ENCODE measurements at regions of chr1 and their contacts with region 1.

Region 1: GRCh38 chr1:56411484-56412180 is 167.7 kb downstream of the PLPP3 start:
- DNase-seq: no peak
- ATAC-seq: no peak
- H3K4me3 ChIP-seq: no peak overlapping the region
- H3K27ac ChIP-seq: peak overlapping the region; percentile 34
- H3K4me1 ChIP-seq: peaks cover 73% of the 10 kb centered on the region
- H3K27me3 ChIP-seq: no peaks in the 10 kb centered on the region
- CTCF ChIP-seq: peak; percentile 28
- EP300 ChIP-seq: no peak
- POLR2A ChIP-seq: no peak
- RAD21 ChIP-seq: no peak

Region 2: DNA sequence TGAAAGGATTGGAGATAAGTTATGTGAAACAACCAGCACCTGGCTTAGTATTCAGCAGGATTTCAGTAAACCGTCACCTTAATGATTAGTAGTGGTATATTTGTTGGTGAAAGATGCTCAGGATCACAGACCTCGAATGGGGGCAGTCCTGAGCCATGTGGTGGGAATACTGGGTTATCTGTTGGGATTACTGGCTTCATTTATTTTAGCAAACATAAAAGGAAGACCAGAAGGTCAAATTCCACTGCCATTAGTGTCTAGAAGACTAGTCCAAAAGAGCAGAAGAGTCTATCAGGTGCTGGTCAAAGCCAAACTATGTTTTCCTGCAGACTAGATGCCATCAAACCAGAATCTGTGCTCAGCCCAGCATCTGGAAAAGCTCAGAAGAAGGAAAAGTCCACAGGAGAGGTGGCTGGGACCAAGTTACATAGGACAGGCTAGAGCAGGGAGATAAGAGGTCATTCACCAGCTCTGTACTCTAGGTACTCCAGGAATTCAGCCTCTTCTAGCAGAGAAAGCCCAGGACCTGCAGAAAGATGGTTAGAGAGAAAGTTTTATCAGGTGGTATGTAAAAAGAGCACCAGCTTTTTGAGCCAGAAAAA is 175.6 kb before region 1 on chr1:
- CTCF ChIA-PET with region 1: no interaction called
- POLR2A ChIA-PET with region 1: no interaction called
- in situ Hi-C with region 1: no loop called
- intact Hi-C with region 1: loop called (anchors 5 kb)
- DNase-seq: peak; percentile 78
- ATAC-seq: peak; percentile 91
- H3K4me3 ChIP-seq: no peak overlapping the region
- H3K27ac ChIP-seq: no peak overlapping the region
- H3K4me1 ChIP-seq: peaks cover 19% of the 10 kb centered on the region
- H3K27me3 ChIP-seq: no peaks in the 10 kb centered on the region
- CTCF ChIP-seq: peak; percentile 64
- EP300 ChIP-seq: peak in 1 of 2 experiments; percentile 25; a peak in 1 of 4 replicates
- POLR2A ChIP-seq: no peak
- RAD21 ChIP-seq: no peak

Region 3: DNA sequence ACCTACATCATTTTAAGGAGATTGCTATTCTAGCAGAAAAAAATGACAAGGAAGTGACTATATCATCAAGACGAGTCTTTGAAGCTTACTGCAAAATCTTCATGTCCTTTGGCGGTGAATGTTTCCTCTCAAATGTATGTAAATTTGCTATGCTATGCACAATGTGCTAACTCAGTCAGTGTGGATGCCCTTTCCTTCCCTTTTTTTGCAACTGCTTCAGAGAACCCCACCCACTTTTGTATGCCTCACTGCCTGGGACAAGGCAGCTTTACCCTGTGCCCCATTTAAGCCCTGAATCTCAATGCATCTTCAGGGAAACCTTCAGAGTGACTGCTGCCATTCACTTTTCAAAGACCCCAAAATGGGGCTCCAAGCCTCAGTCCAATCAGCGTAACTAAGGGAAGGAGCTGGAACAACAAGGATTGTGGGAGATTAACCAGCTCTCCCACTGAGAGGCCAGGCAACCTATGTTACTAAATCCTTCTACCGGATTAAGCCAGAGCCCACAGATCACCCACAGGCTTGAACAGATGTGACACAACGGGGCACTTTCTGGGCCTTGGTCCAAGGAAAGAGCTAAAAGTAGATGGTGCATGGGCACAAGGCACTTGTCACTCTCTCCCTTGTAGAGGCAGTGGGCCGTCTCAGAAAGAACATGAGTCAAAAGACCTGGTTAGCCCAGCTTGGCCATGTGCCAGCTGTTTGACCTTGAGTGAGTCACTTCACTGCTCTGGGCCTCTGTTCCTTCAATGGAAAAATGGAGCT is 13.3 kb after region 1 on chr1:
- CTCF ChIA-PET with region 1: no interaction called
- POLR2A ChIA-PET with region 1: interaction called, 17 read pairs
- in situ Hi-C with region 1: no loop called
- intact Hi-C with region 1: no loop called
- DNase-seq: peak; percentile 76
- ATAC-seq: peak; percentile 35
- H3K4me3 ChIP-seq: no peak overlapping the region
- H3K27ac ChIP-seq: no peak overlapping the region
- H3K4me1 ChIP-seq: peaks cover 39% of the 10 kb centered on the region
- H3K27me3 ChIP-seq: no peaks in the 10 kb centered on the region
- CTCF ChIP-seq: no peak
- EP300 ChIP-seq: no peak; a peak in 1 of 4 replicates
- POLR2A ChIP-seq: no peak
- RAD21 ChIP-seq: no peak

Region 4: DNA sequence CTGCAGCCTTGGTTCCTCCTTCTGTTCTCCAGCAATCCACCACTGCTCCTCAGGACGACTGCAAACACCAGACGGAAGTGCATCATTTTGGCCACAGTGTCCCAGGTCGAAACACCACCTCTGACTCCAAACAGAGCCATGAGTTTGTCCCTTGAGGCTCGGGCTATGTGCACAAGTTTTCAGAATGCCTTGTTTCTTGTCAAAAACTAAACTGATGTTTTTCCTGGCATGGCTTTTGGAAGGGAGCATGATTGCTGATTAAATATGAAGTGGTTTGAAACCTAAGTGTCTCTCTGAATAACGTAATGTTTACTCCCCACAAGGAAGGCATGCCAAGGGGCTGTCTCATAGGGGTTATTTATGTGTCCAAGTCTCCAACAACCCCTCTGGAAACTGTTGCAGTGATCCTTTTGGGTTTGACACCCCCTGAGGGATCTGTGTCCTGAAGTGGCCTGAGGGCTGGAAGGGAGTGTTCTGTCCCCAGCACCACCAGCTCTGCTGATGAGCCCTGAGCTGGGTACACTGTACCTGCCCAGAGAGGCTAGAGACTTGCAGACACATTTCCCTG is 35.0 kb after region 1 on chr1:
- CTCF ChIA-PET with region 1: no interaction called
- POLR2A ChIA-PET with region 1: interaction called, 14 read pairs
- in situ Hi-C with region 1: no loop called
- intact Hi-C with region 1: loop called (anchors 5 kb)
- DNase-seq: no peak
- ATAC-seq: no peak
- H3K4me3 ChIP-seq: no peak overlapping the region
- H3K27ac ChIP-seq: peak overlapping the region; percentile 7
- H3K4me1 ChIP-seq: peaks cover 88% of the 10 kb centered on the region
- H3K27me3 ChIP-seq: no peaks in the 10 kb centered on the region
- CTCF ChIP-seq: no peak
- EP300 ChIP-seq: no peak
- POLR2A ChIP-seq: no peak
- RAD21 ChIP-seq: no peak

Region 5: GRCh38 chr1:56477164-56478111 is 65.8 kb after region 1 on chr1:
- CTCF ChIA-PET with region 1: no interaction called
- POLR2A ChIA-PET with region 1: interaction called, 11 read pairs
- in situ Hi-C with region 1: no loop called
- intact Hi-C with region 1: loop called (anchors 1 kb)
- DNase-seq: peak; percentile 85
- ATAC-seq: peak; percentile 90
- H3K4me3 ChIP-seq: peak overlapping the region; percentile 64 to 77 (median 68)
- H3K27ac ChIP-seq: peak overlapping the region; percentile 95
- H3K4me1 ChIP-seq: peaks cover 82% of the 10 kb centered on the region
- H3K27me3 ChIP-seq: no peaks in the 10 kb centered on the region
- CTCF ChIP-seq: no peak
- EP300 ChIP-seq: peak in 1 of 2 experiments; percentile 54; a peak in 2 of 4 replicates
- POLR2A ChIP-seq: peak; percentile 44 to 73; a peak in 2 of 4 replicates
- RAD21 ChIP-seq: no peak; the same call in none of the 2 replicates

Region 6: DNA sequence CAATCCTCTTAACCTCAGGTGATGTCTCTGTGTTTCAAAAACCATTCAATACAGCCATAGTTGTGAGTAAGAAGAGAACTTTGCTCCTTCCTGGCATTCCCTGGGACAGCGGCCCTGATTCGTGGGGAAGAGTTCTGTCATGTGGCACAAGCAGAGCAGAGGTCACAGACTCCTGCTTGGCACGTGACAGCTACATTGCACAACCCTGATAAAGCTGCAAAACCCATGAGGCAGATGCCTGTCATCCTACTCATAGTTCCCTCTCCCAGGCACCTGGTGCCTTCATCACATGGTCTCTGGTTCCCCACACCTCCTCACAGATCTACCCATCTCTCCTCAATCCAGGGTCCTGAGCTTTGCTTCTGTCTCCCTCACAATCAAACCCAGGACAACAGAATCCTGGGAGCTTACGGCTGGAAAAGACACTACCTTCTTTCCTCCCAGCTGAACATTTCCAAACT is 96.9 kb after region 1 on chr1:
- CTCF ChIA-PET with region 1: no interaction called
- POLR2A ChIA-PET with region 1: interaction called, 19 read pairs
- in situ Hi-C with region 1: loop called (anchors 5 kb)
- intact Hi-C with region 1: loop called (anchors 2 kb)
- DNase-seq: peak; percentile 98
- ATAC-seq: peak; percentile 91
- H3K4me3 ChIP-seq: no peak overlapping the region
- H3K27ac ChIP-seq: peak overlapping the region; percentile 93
- H3K4me1 ChIP-seq: peaks cover 89% of the 10 kb centered on the region
- H3K27me3 ChIP-seq: no peaks in the 10 kb centered on the region
- CTCF ChIP-seq: peak; percentile 20; the same call in 1 of the 2 replicates
- EP300 ChIP-seq: peak; percentile 60 to 95; a peak in 3 of 4 replicates
- POLR2A ChIP-seq: peak in 1 of 2 experiments; percentile 43; a peak in 1 of 4 replicates
- RAD21 ChIP-seq: peak; percentile 74

Region 7: DNA sequence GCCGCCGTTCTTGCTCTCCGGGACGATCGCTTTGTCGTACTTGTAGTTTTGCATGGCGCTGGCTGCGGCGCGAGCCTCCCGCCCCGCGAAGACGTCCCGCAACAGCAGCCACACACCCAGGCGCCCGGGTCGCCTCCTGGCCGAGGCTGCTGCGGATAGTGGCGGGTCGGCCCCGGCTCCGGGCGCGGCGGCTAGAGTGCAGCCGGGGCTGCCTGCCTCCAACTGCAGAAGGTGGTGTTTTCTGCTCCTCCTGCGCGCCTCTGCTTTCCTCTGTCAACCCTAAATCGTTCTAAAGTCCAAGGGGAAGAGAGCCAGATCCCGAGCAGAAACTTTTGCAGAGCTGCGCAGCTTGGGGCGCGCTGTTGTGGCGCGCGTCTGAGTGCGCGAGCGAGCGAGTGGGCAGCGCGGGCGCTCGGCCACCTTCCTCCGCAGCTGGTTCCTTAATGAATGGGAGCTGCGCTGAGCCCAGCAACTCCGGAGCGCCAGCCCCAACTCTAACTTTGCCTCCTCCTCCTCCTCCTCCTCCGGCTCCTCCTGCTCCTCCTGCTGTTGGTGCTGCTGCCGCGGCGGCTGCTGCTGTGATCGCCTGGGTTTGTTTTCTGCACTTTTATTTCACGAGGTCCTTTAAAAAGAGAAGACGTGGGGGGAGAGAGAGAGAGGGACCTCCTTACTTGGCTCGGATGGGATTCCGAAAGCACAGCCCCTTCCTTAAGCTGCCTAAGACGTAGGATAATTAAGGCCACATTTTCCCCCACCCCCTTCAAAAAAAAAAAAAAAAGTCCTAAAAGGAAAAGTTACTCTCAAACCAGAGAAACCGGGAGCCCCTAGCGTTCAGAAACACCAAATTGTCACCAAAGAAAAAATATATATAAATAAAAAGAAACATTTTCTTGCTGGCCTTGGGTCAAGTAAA is 167.6 kb after region 1 on chr1 and contains the start of gene PLPP3:
- CTCF ChIA-PET with region 1: interaction called, 7 read pairs
- POLR2A ChIA-PET with region 1: interaction called, 20 read pairs
- in situ Hi-C with region 1: loop called (anchors 5 kb)
- intact Hi-C with region 1: loop called (anchors 2 kb)
- DNase-seq: peak; percentile 79
- ATAC-seq: peak; percentile 85
- H3K4me3 ChIP-seq: peak within 1 kb of the TSS; percentile 84 to 98 (median 87)
- H3K27ac ChIP-seq: peak within 1 kb of the TSS; percentile 96
- H3K4me1 ChIP-seq: peaks cover 46% of the 10 kb centered on the region
- H3K27me3 ChIP-seq: no peaks in the 10 kb centered on the region; a peak in 1 of 5 replicates
- CTCF ChIP-seq: peak; percentile 54
- EP300 ChIP-seq: peak in 1 of 2 experiments; percentile 10; a peak in 2 of 4 replicates
- POLR2A ChIP-seq: peak; percentile 86 to 95
- RAD21 ChIP-seq: peak; percentile 43; the same call in 1 of the 2 replicates
- total RNA-seq, gene PLPP3: 33.9 and 65.8 TPM in 2 replicates